Naive thymus-derived CD4-positive, alpha-beta T cell (primary cell): ENCODE measurements at regions of chrX and their contacts with region 1.

Region 1: DNA sequence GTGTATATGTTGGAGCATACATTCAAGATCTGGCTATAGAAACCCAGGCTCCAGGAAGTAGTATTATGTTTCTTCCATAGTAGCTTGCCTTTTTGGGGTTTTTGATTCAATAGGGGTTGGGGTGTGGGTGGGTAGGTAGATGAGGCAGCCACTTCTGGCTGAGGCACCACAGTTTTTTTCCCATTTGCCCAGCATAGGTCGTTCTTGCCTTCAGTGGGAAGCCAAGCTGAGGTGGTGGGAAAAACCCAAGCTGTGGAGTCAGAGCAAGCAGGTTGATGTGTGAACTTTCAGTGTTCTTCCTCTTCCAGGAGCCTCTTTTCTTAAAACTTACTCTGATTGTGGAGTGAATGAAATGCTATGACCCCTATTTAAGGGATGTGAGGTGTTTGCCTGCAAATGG is 67.0 kb upstream of the RPS6KA3 start:
- DNase-seq: peak in 1 of 9 donors; percentile 20
- ATAC-seq: no peak
- H3K4me3 ChIP-seq: no peak overlapping the region
- H3K4me3 Mint-ChIP-seq: no peak overlapping the region
- H3K27ac ChIP-seq: no peak overlapping the region
- H3K27ac Mint-ChIP-seq: no peak overlapping the region
- H3K4me1 ChIP-seq: no peaks in the 10 kb centered on the region
- H3K4me1 Mint-ChIP-seq: peaks cover 0 to 7% (median 4%) of the 10 kb centered on the region in 7 donors
- H3K27me3 ChIP-seq: no peaks in the 10 kb centered on the region
- H3K27me3 Mint-ChIP-seq: no peaks in the 10 kb centered on the region

Region 2: GRCh38 chrX:20352935-20353336 is 19.3 kb after region 1 on chrX:
- CTCF ChIA-PET with region 1: no interaction called
- POLR2A ChIA-PET with region 1: no interaction called
- intact Hi-C with region 1: loop called in 1 of 2 experiments (anchors 1 kb)
- DNase-seq: no peak
- ATAC-seq: no peak
- H3K4me3 ChIP-seq: no peak overlapping the region
- H3K4me3 Mint-ChIP-seq: no peak overlapping the region
- H3K27ac ChIP-seq: no peak overlapping the region
- H3K27ac Mint-ChIP-seq: no peak overlapping the region
- H3K4me1 ChIP-seq: peaks cover 0 to 7% of the 10 kb centered on the region in 2 donors
- H3K4me1 Mint-ChIP-seq: peaks cover 0 to 28% (median 20%) of the 10 kb centered on the region in 7 donors
- H3K27me3 ChIP-seq: no peaks in the 10 kb centered on the region
- H3K27me3 Mint-ChIP-seq: peaks cover 0 to 5% (median 0%) of the 10 kb centered on the region in 5 donors